Mammary epithelial cell (primary cell): ENCODE measurements at regions of chr16 and their contacts with region 1.

Region 1: DNA sequence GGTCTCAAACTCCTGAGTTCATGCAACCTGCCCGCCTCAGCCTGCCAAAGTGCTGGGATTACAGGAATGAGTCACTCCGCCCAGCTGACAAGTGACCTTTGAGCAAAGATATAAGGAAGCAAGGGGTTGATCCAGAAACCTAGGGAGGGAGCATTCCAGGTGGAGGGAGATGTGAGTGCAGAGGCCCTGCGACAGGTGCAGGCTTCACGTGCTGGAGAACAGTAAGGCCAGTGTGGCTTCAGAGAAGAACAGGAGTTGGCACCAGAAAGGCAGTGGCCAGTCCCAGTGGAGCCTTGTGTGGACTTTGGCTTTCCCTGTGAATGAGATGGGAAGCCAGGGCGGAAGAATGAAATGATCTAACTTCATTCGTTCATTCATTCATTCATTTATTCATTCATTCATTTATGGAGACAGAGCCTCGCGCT is 73.6 kb upstream of the HAS3 start:
- DNase-seq: peak; percentile 29
- H3K4me3 ChIP-seq: no peak overlapping the region
- H3K27ac ChIP-seq: no peak overlapping the region
- H3K4me1 ChIP-seq: no peaks in the 10 kb centered on the region
- H3K27me3 ChIP-seq: no peaks in the 10 kb centered on the region
- CTCF ChIP-seq: no peak

Region 2: DNA sequence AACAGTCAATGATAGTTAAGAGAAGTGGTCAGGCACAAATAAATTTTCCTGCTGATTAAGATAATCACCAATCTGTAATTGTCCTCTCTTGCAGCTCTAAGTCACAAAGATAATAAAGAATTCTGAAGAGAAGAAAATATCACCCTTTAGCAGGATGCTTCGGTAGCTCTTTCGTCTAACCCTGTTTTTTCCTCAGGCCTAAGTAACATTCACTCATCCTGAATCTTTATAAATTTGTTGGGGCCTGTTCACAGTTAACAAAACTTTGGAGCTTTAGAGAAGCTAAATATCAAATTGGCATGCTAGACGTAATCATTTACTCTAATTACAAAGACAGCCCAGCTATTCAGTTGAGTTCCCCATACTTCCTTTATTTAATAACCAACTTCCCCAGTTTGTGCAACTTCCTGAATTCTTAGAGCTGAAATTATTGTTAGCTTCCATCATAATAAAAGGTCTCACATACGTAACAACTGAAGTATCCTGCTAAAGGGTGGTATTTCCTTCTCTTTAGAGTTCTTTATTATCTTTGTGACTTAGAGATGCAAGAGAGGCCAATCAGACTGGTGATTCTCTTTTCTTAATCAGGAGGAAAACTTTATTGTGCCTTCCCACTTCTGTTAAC is 70.0 kb before region 1 on chr16:
- CTCF ChIA-PET with region 1: no interaction called
- dilution Hi-C with region 1: loop called (anchors 5 kb)
- in situ Hi-C with region 1: no loop called
- intact Hi-C with region 1: no loop called
- DNase-seq: no peak
- H3K4me3 ChIP-seq: no peak overlapping the region
- H3K27ac ChIP-seq: no peak overlapping the region
- H3K4me1 ChIP-seq: no peaks in the 10 kb centered on the region
- H3K27me3 ChIP-seq: no peaks in the 10 kb centered on the region
- CTCF ChIP-seq: no peak

Region 3: GRCh38 chr16:69089091-69089910 is 57.4 kb after region 1 on chr16:
- CTCF ChIA-PET with region 1: no interaction called
- dilution Hi-C with region 1: loop called (anchors 5 kb)
- in situ Hi-C with region 1: no loop called
- intact Hi-C with region 1: no loop called
- DNase-seq: no peak
- H3K4me3 ChIP-seq: no peak overlapping the region
- H3K27ac ChIP-seq: no peak overlapping the region
- H3K4me1 ChIP-seq: no peaks in the 10 kb centered on the region
- H3K27me3 ChIP-seq: no peaks in the 10 kb centered on the region
- CTCF ChIP-seq: no peak

Region 4: DNA sequence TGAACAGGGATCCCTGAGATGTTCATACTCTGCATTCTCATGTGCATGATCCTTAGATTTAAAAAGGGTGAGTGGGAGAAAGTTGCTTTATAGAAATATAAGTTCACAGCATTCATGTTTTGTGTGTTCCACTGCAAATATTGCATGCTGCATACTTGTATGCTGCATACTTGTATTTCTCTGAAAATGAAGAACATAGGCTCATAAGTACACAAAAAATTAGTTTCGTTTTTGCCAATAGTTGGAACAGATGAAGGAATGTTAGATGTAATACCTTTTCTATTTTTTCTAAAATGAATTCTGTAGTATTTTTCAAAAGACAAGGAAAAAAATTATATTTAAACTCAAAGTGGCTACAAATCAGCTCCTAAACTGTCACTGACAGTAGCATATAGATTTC is 612.9 kb after region 1 on chr16:
- CTCF ChIA-PET with region 1: no interaction called
- dilution Hi-C with region 1: no loop called
- in situ Hi-C with region 1: no loop called
- intact Hi-C with region 1: no loop called
- DNase-seq: no peak
- H3K4me3 ChIP-seq: no peak overlapping the region
- H3K27ac ChIP-seq: no peak overlapping the region
- H3K4me1 ChIP-seq: no peaks in the 10 kb centered on the region
- H3K27me3 ChIP-seq: no peaks in the 10 kb centered on the region
- CTCF ChIP-seq: no peak